B cell (primary cell): ENCODE measurements at regions of chr7 and their contacts with region 1.

Region 1: DNA sequence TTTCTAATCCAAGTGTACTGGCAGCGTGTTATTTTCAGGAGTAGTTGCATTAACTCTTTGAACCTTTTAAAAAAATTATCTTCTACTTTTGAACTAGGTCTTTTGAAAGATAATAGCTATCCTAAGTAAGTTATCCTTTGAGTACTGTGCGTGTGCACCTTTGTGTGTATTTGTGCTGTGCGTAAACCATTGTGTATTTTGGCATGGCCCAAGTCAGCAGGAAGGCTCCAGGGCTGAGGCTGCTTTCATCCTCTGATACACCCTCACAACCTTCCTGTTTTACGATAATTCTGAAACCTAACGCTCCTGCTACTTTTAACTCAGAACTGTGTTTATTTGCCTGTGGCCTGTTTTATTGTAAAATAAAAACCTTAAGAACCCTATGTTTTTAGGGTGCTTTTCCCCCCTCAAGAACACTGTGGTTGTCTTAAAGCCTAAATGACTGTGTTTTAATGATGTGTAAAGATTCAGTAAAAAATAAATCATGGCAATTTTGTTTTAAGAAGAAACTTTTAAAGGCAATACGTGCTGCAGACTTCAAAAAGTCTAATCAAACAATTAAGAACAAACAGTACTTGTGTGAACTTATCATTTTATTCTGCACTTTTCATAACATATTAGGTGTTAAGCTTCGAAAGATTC is 57.5 kb downstream of the HDAC9 start:
- DNase-seq: no peak
- ATAC-seq: peak; percentile 49
- H3K4me3 ChIP-seq: no peak overlapping the region
- H3K4me3 Mint-ChIP-seq: peak overlapping the region; percentile 73
- H3K27ac ChIP-seq: peak overlapping the region; percentile 31 to 70
- H3K27ac Mint-ChIP-seq: peak overlapping the region; percentile 91
- H3K4me1 ChIP-seq: peaks cover 23 to 33% of the 10 kb centered on the region in 2 donors
- H3K4me1 Mint-ChIP-seq: peaks cover 49% of the 10 kb centered on the region
- H3K27me3 ChIP-seq: no peaks in the 10 kb centered on the region
- H3K27me3 Mint-ChIP-seq: no peaks in the 10 kb centered on the region
- CTCF ChIP-seq: no peak

Region 2: GRCh38 chr7:18541181-18541870 is 11.7 kb before region 1 on chr7:
- CTCF ChIA-PET with region 1: interaction called, 4 read pairs
- POLR2A ChIA-PET with region 1: no interaction called
- intact Hi-C with region 1: loop called (anchors 1 kb)
- DNase-seq: no peak
- ATAC-seq: no peak
- H3K4me3 ChIP-seq: no peak overlapping the region
- H3K4me3 Mint-ChIP-seq: no peak overlapping the region
- H3K27ac ChIP-seq: no peak overlapping the region
- H3K27ac Mint-ChIP-seq: no peak overlapping the region
- H3K4me1 ChIP-seq: peaks cover 9 to 21% of the 10 kb centered on the region in 2 donors
- H3K4me1 Mint-ChIP-seq: peaks cover 51% of the 10 kb centered on the region
- H3K27me3 ChIP-seq: no peaks in the 10 kb centered on the region
- H3K27me3 Mint-ChIP-seq: no peaks in the 10 kb centered on the region
- CTCF ChIP-seq: no peak

Region 3: GRCh38 chr7:18570890-18571478 is 17.9 kb after region 1 on chr7:
- CTCF ChIA-PET with region 1: interaction called, 5 read pairs
- POLR2A ChIA-PET with region 1: interaction called, 3 read pairs
- intact Hi-C with region 1: loop called (anchors 1 kb)
- DNase-seq: no peak
- ATAC-seq: no peak
- H3K4me3 ChIP-seq: no peak overlapping the region
- H3K4me3 Mint-ChIP-seq: no peak overlapping the region
- H3K27ac ChIP-seq: peak overlapping the region in 1 of 2 donors; percentile 44
- H3K27ac Mint-ChIP-seq: peak overlapping the region; percentile 20
- H3K4me1 ChIP-seq: peaks cover 45 to 56% of the 10 kb centered on the region in 2 donors
- H3K4me1 Mint-ChIP-seq: peaks cover 62% of the 10 kb centered on the region
- H3K27me3 ChIP-seq: no peaks in the 10 kb centered on the region
- H3K27me3 Mint-ChIP-seq: no peaks in the 10 kb centered on the region
- CTCF ChIP-seq: no peak